Activated B cell treated with CpG ODN at 0.5 μM for 24 hours (primary cell): ENCODE measurements at regions of chr20 and their contacts with region 1.

Region 1: GRCh38 chr20:14337400-14338171 is at the start of gene FLRT3:
- DNase-seq: peak; percentile 17
- ATAC-seq: peak; percentile 79
- H3K4me3 Mint-ChIP-seq: peak within 1 kb of the TSS; percentile 50
- H3K27ac Mint-ChIP-seq: no peak within 1 kb of the TSS
- H3K4me1 Mint-ChIP-seq: peaks cover 5% of the 10 kb centered on the region
- H3K27me3 Mint-ChIP-seq: peaks cover 12% of the 10 kb centered on the region
- CTCF ChIP-seq: no peak
- total RNA-seq, gene FLRT3: not detected in 2 replicates

Region 2: GRCh38 chr20:15236812-15237211 is 899.2 kb after region 1 on chr20:
- CTCF ChIA-PET with region 1: interaction called, 6 read pairs
- POLR2A ChIA-PET with region 1: no interaction called
- intact Hi-C with region 1: loop called (anchors 1 kb)
- DNase-seq: no peak
- ATAC-seq: peak; percentile 67
- H3K4me3 Mint-ChIP-seq: no peak overlapping the region
- H3K27ac Mint-ChIP-seq: peak overlapping the region; percentile 16
- H3K4me1 Mint-ChIP-seq: peaks cover 10% of the 10 kb centered on the region
- H3K27me3 Mint-ChIP-seq: no peaks in the 10 kb centered on the region
- CTCF ChIP-seq: no peak

Region 3: DNA sequence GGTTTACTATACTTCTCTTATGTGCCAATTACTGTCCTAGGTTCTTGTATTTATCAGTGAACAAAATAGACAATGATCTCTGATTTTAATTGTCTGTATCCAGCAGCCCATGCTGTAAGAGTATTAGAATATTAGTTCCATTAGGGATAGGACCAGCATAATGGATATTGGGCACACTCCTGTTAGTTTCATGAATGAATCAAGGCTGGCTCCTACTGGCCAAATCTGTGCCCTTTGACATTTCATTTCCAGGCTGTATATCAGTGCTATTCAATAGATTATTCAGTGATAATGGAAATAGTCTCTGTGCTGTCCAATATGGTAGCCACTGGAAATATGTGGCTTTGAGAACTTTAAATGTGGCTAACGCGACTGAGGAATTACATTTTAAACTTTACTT is 1007.7 kb after region 1 on chr20:
- CTCF ChIA-PET with region 1: interaction called, 4 read pairs
- POLR2A ChIA-PET with region 1: no interaction called
- intact Hi-C with region 1: loop called (anchors 5 kb)
- DNase-seq: no peak
- ATAC-seq: no peak
- H3K4me3 Mint-ChIP-seq: no peak overlapping the region
- H3K27ac Mint-ChIP-seq: no peak overlapping the region
- H3K4me1 Mint-ChIP-seq: peaks cover 6% of the 10 kb centered on the region
- H3K27me3 Mint-ChIP-seq: no peaks in the 10 kb centered on the region
- CTCF ChIP-seq: no peak